Posterior cingulate gyrus (tissue), 11 donors: ENCODE measurements at regions of chr7 and their contacts with region 1.

Region 1: GRCh38 chr7:112206238-112207044 is at the starts of genes DOCK4 and ZNF277:
- DNase-seq: peak; percentile 99 to 100 (median 99)

Region 2: GRCh38 chr7:111708072-111708471 is 498.4 kb before region 1 on chr7:
- intact Hi-C with region 1: no loop called
- DNase-seq: no peak

Region 3: GRCh38 chr7:111752022-111752582 is 454.3 kb before region 1 on chr7:
- intact Hi-C with region 1: loop called (anchors 10 kb)
- DNase-seq: peak in 8 of 10 donors; percentile 60 to 95 (median 70)

Region 4: GRCh38 chr7:111953611-111954010 is 252.8 kb before region 1 on chr7:
- intact Hi-C with region 1: loop called (anchors 10 kb)
- DNase-seq: peak in 1 of 10 donors; percentile 24

Region 5: GRCh38 chr7:112103246-112103645 is 103.2 kb before region 1 on chr7:
- intact Hi-C with region 1: no loop called
- DNase-seq: no peak

Region 6: GRCh38 chr7:112162142-112163020 is 44.1 kb before region 1 on chr7:
- intact Hi-C with region 1: loop called (anchors 5 kb)
- DNase-seq: peak; percentile 48 to 94 (median 62)

Region 7: DNA sequence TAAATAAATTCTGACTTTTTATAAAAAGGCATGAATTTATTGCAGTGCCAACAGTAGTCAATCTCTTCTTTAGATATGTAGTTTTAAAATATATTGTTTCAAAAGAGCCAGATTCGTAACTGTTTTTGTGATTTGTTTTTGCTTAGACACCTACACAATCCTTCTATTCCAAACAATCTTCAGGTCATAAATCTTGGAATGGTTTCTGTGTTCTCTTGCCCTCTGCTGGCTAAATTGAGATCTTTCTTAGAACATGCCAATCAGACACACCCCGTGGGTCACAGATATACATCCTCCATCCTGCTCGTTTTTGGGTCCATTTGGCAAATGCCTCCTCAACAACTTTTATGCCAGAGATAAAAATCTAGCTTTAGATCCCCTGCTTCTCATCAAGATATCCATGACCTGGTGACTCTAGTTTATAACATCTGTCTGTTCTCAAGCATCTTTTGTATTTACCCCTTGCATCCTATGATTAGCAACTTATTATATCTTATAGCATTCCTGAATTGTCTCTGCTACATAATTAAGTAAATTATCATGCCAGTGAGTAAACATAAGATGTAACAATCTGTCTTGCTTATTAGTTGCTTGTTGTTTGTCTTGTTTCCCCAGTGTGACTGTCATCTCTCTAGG is 208.5 kb after region 1 on chr7:
- intact Hi-C with region 1: loop called (anchors 5 kb)
- DNase-seq: no peak